ENCODE measurements at regions of chr20 and their contacts with region 1.

Region 1: GRCh38 chr20:58236612-58237330 is 8.3 kb upstream of the ANKRD60 start:
- DNase-seq: peak; percentile 68
- H3K4me3 ChIP-seq: peak overlapping the region; percentile 60
- H3K27ac ChIP-seq: peak overlapping the region; percentile 63
- H3K27me3 ChIP-seq: no peaks in the 10 kb centered on the region
- CTCF ChIP-seq: peak; percentile 91

Region 2: GRCh38 chr20:57938158-57939108 is 298.3 kb before region 1 on chr20:
- in situ Hi-C with region 1: no loop called
- DNase-seq: peak; percentile 11
- H3K4me3 ChIP-seq: no peak overlapping the region
- H3K27ac ChIP-seq: no peak overlapping the region
- H3K27me3 ChIP-seq: no peaks in the 10 kb centered on the region
- CTCF ChIP-seq: peak; percentile 52

Region 3: DNA sequence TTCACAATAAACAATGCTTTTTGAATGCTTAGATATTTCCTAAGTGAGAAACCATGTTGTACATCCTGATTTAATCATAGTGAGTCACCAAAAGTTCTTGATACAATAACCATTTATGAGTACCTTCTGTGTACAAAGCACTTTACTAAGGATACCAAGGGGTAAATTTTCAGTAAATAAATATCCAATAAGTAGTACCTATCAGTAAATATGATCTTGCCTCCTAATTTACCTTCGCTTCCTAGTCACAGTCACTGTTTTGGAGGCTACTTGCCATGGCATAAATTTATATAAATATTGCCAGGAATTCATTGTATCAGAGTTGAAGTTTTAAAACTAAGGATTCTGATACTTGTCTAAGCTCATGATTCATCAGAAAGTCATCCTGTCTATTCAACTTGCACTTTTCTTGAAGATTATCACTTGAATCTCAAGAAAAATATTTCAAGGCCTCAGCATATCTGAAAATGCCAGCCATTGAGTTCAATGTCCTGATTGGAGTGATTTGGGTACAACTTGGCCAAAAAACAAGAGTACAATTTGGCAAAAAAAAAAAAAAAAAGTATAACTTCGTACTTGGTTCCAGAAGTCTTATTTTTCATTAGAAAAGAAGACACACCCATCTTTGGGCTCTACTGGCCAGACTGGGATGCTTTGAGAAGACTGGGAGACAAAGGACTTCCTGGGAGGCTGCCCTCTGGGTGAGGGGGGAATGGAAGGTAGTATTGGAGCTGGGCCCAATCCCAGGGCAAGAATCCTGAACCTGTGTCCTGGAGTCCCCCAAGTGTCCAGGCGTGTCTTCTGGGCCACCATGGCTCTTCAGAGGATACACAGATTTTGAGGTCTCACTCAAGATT is 105.6 kb after region 1 on chr20:
- in situ Hi-C with region 1: no loop called
- DNase-seq: peak; percentile 29
- H3K4me3 ChIP-seq: no peak overlapping the region
- H3K27ac ChIP-seq: peak overlapping the region; percentile 81
- H3K27me3 ChIP-seq: no peaks in the 10 kb centered on the region
- CTCF ChIP-seq: no peak

Region 4: GRCh38 chr20:58447511-58448391 is 211.0 kb after region 1 on chr20:
- in situ Hi-C with region 1: loop called (anchors 10 kb)
- DNase-seq: peak; percentile 56
- H3K4me3 ChIP-seq: no peak overlapping the region
- H3K27ac ChIP-seq: no peak overlapping the region
- H3K27me3 ChIP-seq: no peaks in the 10 kb centered on the region
- CTCF ChIP-seq: peak; percentile 86

Region 5: DNA sequence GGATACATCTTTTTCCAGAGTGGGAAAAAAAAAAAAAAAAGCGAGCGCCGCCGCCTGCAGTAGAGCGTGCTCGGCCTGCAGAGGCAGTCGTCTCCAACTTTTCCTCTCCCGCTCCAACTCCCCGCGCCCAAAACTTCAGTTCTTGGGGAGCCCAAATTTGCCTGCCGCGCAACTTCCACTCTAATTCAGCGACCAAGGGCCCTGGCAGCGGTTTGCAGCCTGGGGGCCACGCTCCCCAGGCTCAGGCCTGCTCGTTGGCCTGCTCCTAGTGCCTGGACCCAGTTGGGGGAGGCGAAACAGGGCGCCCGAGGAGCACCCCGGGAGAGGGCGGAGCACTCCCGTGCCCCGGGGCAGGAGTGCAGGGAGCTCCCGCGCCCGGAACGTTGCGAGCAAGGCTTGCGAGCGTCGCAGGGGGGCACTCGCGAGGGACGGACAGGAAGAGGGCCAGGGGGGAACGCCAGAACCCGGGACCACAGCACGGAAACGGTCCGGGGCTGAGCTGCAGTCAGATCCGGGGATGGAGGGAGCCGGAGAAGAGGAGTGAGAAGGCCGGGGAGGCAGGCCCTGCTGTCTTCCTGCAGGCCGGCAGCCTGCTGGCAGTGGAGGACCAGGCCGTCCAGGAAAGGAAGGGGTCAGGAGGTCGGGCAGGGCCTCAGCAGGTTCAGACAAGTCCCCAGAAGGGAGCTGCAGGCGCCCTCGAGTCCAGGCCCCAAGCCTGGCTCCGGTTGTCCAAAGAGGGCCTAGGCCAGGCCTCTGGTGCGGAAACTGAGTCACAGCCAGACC is 414.2 kb after region 1 on chr20 and contains the start of gene STX16:
- in situ Hi-C with region 1: loop called (anchors 5 kb)
- DNase-seq: peak; percentile 79
- H3K4me3 ChIP-seq: peak within 1 kb of the TSS; percentile 93
- H3K27ac ChIP-seq: peak within 1 kb of the TSS; percentile 58
- H3K27me3 ChIP-seq: no peaks in the 10 kb centered on the region
- CTCF ChIP-seq: peak; percentile 68